MCF 10A (cell line): ENCODE measurements at regions of chr10 and their contacts with region 1.

Region 1: GRCh38 chr10:14954001-14954770 is at the start of gene DCLRE1C:
- DNase-seq: peak; percentile 92
- H3K4me3 Mint-ChIP-seq: peak within 1 kb of the TSS; percentile 92
- H3K27ac Mint-ChIP-seq: peak within 1 kb of the TSS; percentile 90
- H3K4me1 Mint-ChIP-seq: peaks cover 5% of the 10 kb centered on the region
- H3K27me3 Mint-ChIP-seq: no peaks in the 10 kb centered on the region
- CTCF ChIP-seq: no peak
- total RNA-seq, gene DCLRE1C: 10.3 and 11.5 TPM in 2 replicates

Region 2: GRCh38 chr10:14173706-14174594 is 780.2 kb before region 1 on chr10:
- CTCF ChIA-PET with region 1: no interaction called
- POLR2A ChIA-PET with region 1: no interaction called
- intact Hi-C with region 1: no loop called
- DNase-seq: no peak
- H3K4me3 Mint-ChIP-seq: peak overlapping the region; percentile 60
- H3K27ac Mint-ChIP-seq: no peak overlapping the region
- H3K4me1 Mint-ChIP-seq: peaks cover 12% of the 10 kb centered on the region
- H3K27me3 Mint-ChIP-seq: peaks cover 85% of the 10 kb centered on the region
- CTCF ChIP-seq: no peak

Region 3: DNA sequence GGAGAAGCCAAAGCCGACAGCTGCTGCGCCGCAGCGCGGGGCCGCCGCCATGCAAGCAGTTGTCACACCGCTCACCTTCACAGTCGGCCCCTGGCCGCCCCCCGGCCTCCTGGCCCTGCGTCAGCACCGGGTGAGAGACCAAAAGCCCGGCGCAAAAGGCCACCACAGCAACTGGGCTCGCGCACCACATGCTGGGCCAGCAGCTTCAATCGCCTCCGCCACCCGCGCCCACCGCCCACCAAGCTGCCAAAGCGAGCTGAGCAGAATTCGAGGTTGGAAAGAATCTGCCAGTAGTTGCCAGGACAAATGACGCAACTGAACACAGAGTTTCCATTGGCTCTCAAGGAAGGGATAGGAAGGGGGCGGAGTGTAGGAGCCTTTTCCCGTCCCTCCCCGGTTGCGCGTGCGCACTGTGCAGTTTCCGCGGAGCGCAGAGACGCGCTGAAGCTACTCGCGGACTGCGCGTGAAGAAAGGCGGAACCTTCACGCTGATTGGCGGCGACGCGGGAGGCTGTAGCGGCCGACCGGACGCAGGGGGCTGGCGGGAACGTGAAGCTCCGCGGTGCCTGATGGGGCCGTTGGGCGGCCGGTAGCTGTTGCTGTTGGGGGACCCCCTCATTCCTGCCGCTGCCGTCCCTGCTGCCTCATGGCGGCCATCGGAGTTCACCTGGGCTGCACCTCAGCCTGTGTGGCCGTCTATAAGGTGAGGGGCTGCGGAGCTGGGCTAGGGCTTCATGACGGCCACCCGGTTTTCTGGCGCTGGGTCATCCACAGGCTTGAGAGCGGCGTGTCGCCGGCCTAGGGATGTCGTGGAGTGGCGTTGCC is 116.2 kb before region 1 on chr10 and contains the starts of genes CDNF, HSPA14 and MSANTD7:
- CTCF ChIA-PET with region 1: no interaction called
- POLR2A ChIA-PET with region 1: interaction called, 25 read pairs
- intact Hi-C with region 1: loop called (anchors 5 kb)
- DNase-seq: peak; percentile 99
- H3K4me3 Mint-ChIP-seq: peak within 1 kb of the TSS; percentile 76
- H3K27ac Mint-ChIP-seq: peak within 1 kb of the TSS; percentile 91
- H3K4me1 Mint-ChIP-seq: no peaks in the 10 kb centered on the region
- H3K27me3 Mint-ChIP-seq: no peaks in the 10 kb centered on the region
- CTCF ChIP-seq: no peak
- total RNA-seq, gene CDNF: 1.9 and 2.9 TPM in 2 replicates
- total RNA-seq, gene HSPA14: 12.1 and 14.0 TPM in 2 replicates
- total RNA-seq, gene MSANTD7: 17.2 and 18.1 TPM in 2 replicates

Region 4: GRCh38 chr10:14904316-14904732 is 49.9 kb before region 1 on chr10:
- CTCF ChIA-PET with region 1: interaction called, 5 read pairs
- POLR2A ChIA-PET with region 1: interaction called, 12 read pairs
- intact Hi-C with region 1: no loop called
- DNase-seq: peak; percentile 39
- H3K4me3 Mint-ChIP-seq: no peak overlapping the region
- H3K27ac Mint-ChIP-seq: no peak overlapping the region
- H3K4me1 Mint-ChIP-seq: no peaks in the 10 kb centered on the region
- H3K27me3 Mint-ChIP-seq: no peaks in the 10 kb centered on the region
- CTCF ChIP-seq: peak; percentile 39

Region 5: DNA sequence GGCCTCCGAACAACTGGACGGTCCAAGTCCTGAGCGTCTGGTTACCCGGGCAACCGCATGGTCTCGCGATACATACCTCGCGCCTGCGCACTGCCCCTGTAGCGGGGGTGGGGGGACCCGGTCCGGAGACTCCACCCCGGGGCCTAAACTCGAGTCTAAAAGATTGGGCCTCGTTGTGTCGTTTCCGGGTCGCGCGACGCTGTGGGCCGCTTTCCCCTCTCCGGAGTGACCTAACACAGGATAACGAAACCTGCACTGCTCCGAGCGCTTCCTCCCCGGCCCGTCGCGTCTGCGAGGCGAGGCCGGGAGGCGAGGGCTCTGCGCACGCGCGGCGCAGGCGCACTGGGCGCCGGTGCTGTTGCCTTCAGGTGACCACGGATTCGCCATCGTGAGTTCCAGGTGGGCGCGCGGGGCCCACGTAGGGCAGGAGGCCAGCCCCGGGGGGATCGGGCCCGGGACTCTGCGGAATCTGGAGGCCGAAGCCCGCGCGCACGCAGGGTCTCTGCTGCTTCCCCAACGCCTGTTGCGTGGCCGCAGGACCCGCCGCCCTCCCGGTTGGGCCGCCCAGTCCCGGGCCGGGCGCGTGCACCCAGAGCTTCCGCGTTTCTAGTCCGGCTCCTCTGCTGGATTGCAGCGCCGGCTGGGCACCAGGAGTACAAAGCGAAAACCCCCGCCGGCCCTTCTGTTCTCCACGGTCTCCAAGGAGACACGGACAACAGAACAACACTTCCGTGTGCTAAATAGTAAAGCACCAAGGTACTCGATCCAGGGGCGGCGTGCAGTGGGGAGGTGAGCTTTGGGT is 143.0 kb after region 1 on chr10 and contains the start of gene RPP38:
- CTCF ChIA-PET with region 1: interaction called, 9 read pairs
- POLR2A ChIA-PET with region 1: interaction called, 27 read pairs
- intact Hi-C with region 1: no loop called
- DNase-seq: peak; percentile 96
- H3K4me3 Mint-ChIP-seq: peak within 1 kb of the TSS; percentile 94
- H3K27ac Mint-ChIP-seq: peak within 1 kb of the TSS; percentile 92
- H3K4me1 Mint-ChIP-seq: peaks cover 16% of the 10 kb centered on the region
- H3K27me3 Mint-ChIP-seq: no peaks in the 10 kb centered on the region
- CTCF ChIP-seq: no peak
- total RNA-seq, gene RPP38: 26.4 and 30.8 TPM in 2 replicates

Region 6: GRCh38 chr10:15168781-15169554 is 214.8 kb after region 1 on chr10:
- CTCF ChIA-PET with region 1: interaction called, 3 read pairs
- POLR2A ChIA-PET with region 1: interaction called, 14 read pairs
- intact Hi-C with region 1: no loop called
- DNase-seq: peak; percentile 92
- H3K4me3 Mint-ChIP-seq: peak overlapping the region; percentile 87
- H3K27ac Mint-ChIP-seq: peak overlapping the region; percentile 80
- H3K4me1 Mint-ChIP-seq: peaks cover 23% of the 10 kb centered on the region
- H3K27me3 Mint-ChIP-seq: no peaks in the 10 kb centered on the region
- CTCF ChIP-seq: no peak